Heart right ventricle (tissue), 16 donors: ENCODE measurements at regions of chr17 and their contacts with region 1.

Region 1: DNA sequence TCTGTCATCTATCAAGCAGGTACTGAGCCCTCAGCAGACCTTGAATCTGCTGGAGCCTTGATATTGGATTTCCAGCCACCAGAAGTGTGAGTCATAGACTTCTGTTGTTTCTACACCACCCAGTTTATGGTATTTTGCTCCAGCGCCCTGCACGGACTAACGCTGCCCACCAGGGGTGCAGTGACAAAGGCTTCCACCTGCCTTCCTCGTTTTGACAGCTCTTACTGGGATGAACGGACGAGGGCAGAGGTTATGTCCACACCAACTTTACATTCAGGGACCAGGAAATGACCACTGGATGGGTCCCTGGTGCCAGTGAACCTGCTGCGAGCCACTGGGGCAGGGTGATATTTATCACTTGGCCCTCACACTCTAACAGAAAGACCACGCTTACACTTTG is 66.6 kb upstream of the CBX4 start:
- DNase-seq: no peak
- ATAC-seq: no peak
- H3K4me3 ChIP-seq: no peak overlapping the region
- H3K27ac ChIP-seq: no peak overlapping the region
- H3K4me1 ChIP-seq: peaks cover 0 to 6% (median 0%) of the 10 kb centered on the region in 9 donors
- H3K27me3 ChIP-seq: peaks cover 0 to 57% (median 33%) of the 10 kb centered on the region in 7 donors
- CTCF ChIP-seq: no peak

Region 2: GRCh38 chr17:79850571-79851461 is 55.0 kb before region 1 on chr17:
- intact Hi-C with region 1: loop called in 2 of 10 experiments (anchors 10 kb)
- DNase-seq: no peak
- ATAC-seq: no peak
- H3K4me3 ChIP-seq: no peak overlapping the region
- H3K27ac ChIP-seq: no peak overlapping the region
- H3K4me1 ChIP-seq: peaks cover 0 to 13% (median 1%) of the 10 kb centered on the region in 9 donors
- H3K27me3 ChIP-seq: peaks cover 0 to 29% (median 0%) of the 10 kb centered on the region in 7 donors
- CTCF ChIP-seq: no peak